Ascending aorta (tissue), 2 donors: ENCODE measurements at regions of chrX and their contacts with region 1.

Region 1: DNA sequence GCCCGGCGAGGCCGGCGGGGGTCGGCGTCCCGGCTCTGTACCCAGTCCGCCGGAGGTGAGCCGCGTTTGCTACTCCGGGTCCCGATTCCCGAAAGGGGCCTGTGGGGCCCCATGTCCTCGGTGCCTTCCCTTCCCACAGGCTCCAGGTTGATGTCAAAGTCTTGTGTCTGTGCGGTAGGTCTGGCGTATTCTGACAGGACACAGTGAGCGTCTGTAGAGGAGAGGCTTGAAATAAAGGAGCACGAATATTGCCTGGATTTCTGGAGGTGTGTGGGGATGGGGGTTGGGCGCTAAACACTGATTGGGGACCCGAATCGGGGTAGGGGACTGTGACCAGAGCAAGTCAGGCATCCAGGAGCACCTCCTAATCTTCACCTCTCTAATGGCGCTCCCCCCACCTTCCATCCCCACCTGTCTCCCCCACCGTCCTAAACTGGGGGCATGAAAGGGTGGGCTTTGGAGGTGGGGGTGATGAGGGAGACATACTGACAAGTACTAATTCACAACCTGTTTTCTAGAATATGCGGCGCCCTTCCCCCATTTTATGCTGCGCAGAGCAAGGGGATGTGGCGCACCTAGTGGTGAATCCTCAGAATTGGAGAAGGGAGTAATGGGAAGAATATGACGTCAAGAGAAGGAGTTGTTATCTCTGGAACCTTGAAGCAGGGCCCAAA is 841 bp downstream of the GPRASP2 start:
- DNase-seq: peak in 1 of 2 donors; percentile 80
- H3K4me3 ChIP-seq: peak overlapping the region; percentile 56 to 87
- H3K27ac ChIP-seq: peak overlapping the region; percentile 85 to 86
- H3K4me1 ChIP-seq: no peaks in the 10 kb centered on the region
- H3K27me3 ChIP-seq: no peaks in the 10 kb centered on the region
- CTCF ChIP-seq: peak; percentile 37 to 60 (median 55)

Region 2: DNA sequence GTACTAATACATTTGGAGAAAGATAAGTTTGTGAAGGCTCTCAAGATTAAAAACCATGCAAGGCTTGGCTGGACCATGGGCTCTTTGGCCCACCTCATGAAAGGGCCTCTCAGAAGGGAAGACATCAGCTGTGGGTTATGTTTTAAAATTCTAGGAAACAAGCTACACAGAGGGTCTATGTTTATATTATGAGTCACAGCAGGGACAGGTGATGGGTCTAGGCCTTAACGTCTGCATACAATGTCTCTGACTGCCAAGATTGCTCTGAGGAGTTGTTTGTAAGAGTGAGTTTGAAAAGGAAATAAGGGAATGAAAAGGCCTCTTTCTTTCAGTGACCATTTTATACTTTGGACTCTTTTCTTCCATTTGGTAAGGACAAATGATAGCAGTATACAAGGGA is 976.4 kb before region 1 on chrX:
- intact Hi-C with region 1: no loop called
- DNase-seq: no peak
- H3K4me3 ChIP-seq: no peak overlapping the region
- H3K27ac ChIP-seq: no peak overlapping the region
- H3K4me1 ChIP-seq: no peaks in the 10 kb centered on the region
- H3K27me3 ChIP-seq: no peaks in the 10 kb centered on the region
- CTCF ChIP-seq: no peak

Region 3: GRCh38 chrX:102515975-102516941 is 196.8 kb before region 1 on chrX and contains the start of gene TMSB15A:
- intact Hi-C with region 1: loop called (anchors 10 kb)
- DNase-seq: peak in 1 of 2 donors; percentile 79
- H3K4me3 ChIP-seq: peak within 1 kb of the TSS; percentile 43 to 64
- H3K27ac ChIP-seq: peak within 1 kb of the TSS; percentile 50 to 73
- H3K4me1 ChIP-seq: no peaks in the 10 kb centered on the region
- H3K27me3 ChIP-seq: no peaks in the 10 kb centered on the region
- CTCF ChIP-seq: no peak
- total RNA-seq, gene TMSB15A: not detected

Region 4: DNA sequence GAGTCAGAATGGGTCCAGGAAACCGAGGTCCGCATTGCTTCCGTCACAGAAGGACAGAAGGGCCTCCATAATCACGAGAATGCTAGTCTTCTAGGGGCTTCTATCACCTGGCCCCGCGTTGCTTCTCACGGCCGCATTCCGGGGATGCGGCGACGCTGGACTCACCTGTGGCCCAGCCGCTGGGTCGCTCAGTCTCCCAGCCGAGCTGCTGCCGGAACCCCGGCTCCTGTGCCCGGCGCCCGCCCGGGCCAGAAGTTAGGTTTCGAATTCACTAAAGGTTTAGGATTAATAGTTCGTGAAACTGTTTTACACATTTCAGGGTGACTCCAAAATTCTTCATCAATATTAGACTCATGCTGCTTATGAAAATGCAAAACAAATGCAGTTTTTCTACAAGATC is 164.9 kb before region 1 on chrX:
- intact Hi-C with region 1: no loop called
- DNase-seq: no peak
- H3K4me3 ChIP-seq: no peak overlapping the region
- H3K27ac ChIP-seq: no peak overlapping the region
- H3K4me1 ChIP-seq: no peaks in the 10 kb centered on the region
- H3K27me3 ChIP-seq: no peaks in the 10 kb centered on the region
- CTCF ChIP-seq: no peak

Region 5: DNA sequence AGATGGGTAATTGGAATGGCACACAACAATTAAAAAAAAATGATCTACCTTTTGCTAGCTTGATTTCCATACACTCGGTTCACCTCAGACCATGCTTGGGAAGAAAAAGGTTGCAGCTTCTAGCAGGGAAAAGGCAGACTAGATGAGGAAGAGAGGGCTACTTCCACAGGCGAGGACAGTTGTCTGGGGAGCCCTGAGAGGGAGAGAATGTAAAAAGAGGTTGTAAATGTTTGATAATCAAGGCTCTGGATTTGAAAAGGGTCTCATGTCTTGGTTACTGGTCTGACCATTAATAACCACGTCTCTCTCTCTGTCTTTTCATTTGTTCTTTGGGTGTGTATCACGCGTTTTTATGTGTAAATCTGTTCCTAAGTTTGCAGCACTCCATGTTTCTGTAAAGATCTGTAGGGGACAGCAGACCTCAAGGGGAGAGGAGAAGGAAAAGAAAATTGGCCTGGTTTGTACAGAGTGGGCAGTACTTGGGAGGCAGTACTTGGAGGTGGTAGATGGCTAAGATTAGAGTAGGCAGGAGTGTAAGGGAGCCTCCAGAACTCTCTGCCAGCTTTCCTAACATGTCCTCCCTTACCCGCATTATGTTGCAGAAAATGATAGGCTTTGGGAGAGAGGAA is 113.0 kb before region 1 on chrX:
- intact Hi-C with region 1: loop called (anchors 5 kb)
- DNase-seq: no peak
- H3K4me3 ChIP-seq: peak overlapping the region; percentile 60 to 70
- H3K27ac ChIP-seq: peak overlapping the region; percentile 71 to 80
- H3K4me1 ChIP-seq: no peaks in the 10 kb centered on the region
- H3K27me3 ChIP-seq: no peaks in the 10 kb centered on the region
- CTCF ChIP-seq: no peak

Region 6: DNA sequence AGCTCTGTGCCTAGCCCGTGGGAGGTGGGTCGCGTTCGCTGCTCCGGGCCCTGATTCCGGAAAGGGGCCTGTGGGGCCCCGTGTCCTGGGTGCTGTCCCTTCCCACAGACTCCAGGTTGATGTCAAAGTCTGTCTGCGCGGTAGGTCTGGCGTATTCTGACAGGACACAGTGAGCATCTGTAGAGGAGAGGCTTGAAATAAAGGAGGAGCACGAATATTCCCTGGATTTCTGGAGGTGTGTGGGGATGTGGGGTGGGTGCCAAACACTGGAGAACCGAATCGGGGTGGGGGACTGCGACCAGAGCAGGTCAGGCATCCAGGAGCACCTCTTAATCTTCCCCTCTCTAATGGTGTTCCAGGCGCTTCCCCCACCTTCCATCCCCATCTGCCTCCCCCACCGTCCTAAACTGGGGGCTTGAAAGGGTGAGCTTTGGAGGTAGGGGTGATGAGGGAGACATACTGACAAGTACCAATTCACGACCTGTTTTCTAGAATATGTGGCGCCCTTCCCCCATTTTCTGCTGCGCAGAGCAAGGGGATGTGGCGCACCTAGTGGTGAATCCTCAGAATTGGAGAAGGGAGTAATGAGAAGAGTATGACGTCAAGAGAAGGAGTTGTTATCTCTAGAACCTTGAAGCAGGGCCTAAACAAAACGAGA is 60.9 kb before region 1 on chrX:
- intact Hi-C with region 1: loop called (anchors 2 kb)
- DNase-seq: peak in 1 of 2 donors; percentile 78
- H3K4me3 ChIP-seq: peak overlapping the region; percentile 59 to 72
- H3K27ac ChIP-seq: peak overlapping the region; percentile 73 to 75
- H3K4me1 ChIP-seq: no peaks in the 10 kb centered on the region
- H3K27me3 ChIP-seq: no peaks in the 10 kb centered on the region
- CTCF ChIP-seq: peak; percentile 38 to 61 (median 47)

Region 7: GRCh38 chrX:102768987-102769761 is 56.1 kb after region 1 on chrX:
- intact Hi-C with region 1: loop called (anchors 10 kb)
- DNase-seq: peak; percentile 35 to 86
- H3K4me3 ChIP-seq: peak overlapping the region; percentile 52 to 54
- H3K27ac ChIP-seq: no peak overlapping the region
- H3K4me1 ChIP-seq: no peaks in the 10 kb centered on the region
- H3K27me3 ChIP-seq: no peaks in the 10 kb centered on the region
- CTCF ChIP-seq: no peak